Activated CD4-positive, alpha-beta memory T cell treated with anti-CD3 and anti-CD28 coated beads for 36 hours (primary cell): ENCODE measurements at regions of chr16 and their contacts with region 1.

Region 1: GRCh38 chr16:79316004-79316458 is 284.5 kb downstream of the MAF start:
- DNase-seq: peak; percentile 92
- H3K4me3 Mint-ChIP-seq: peak overlapping the region; percentile 28
- H3K27ac Mint-ChIP-seq: peak overlapping the region; percentile 91
- H3K4me1 Mint-ChIP-seq: peaks cover 37% of the 10 kb centered on the region
- H3K27me3 Mint-ChIP-seq: peaks cover 4% of the 10 kb centered on the region

Region 2: DNA sequence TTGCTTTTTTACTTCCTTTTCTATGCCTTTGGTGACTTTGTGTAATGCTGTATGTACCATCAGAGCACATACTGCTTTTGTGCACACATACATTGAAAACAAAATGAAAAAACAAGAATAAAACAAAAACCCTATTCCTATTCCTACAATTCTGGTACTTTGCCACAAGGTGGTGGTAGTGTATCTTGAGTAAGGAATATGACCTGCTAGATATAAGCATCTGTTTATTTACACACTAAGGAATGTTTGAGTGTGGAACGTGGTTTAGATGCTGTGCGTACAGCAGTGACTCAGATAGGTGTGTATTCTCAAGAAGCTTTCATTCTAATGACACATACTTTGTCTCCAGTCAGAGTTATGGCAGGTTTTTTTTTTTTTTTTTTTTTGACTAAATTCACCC is 610.3 kb before region 1 on chr16:
- CTCF ChIA-PET with region 1: no interaction called
- POLR2A ChIA-PET with region 1: no interaction called
- intact Hi-C with region 1: loop called (anchors 1 kb)
- DNase-seq: peak; percentile 51
- H3K4me3 Mint-ChIP-seq: no peak overlapping the region
- H3K27ac Mint-ChIP-seq: peak overlapping the region; percentile 87
- H3K4me1 Mint-ChIP-seq: peaks cover 16% of the 10 kb centered on the region
- H3K27me3 Mint-ChIP-seq: no peaks in the 10 kb centered on the region

Region 3: GRCh38 chr16:78892951-78893733 is 422.9 kb before region 1 on chr16:
- CTCF ChIA-PET with region 1: no interaction called
- POLR2A ChIA-PET with region 1: interaction called, 5 read pairs
- intact Hi-C with region 1: loop called (anchors 1 kb)
- DNase-seq: peak; percentile 65
- H3K4me3 Mint-ChIP-seq: peak overlapping the region; percentile 20
- H3K27ac Mint-ChIP-seq: peak overlapping the region; percentile 96
- H3K4me1 Mint-ChIP-seq: peaks cover 86% of the 10 kb centered on the region
- H3K27me3 Mint-ChIP-seq: no peaks in the 10 kb centered on the region

Region 4: DNA sequence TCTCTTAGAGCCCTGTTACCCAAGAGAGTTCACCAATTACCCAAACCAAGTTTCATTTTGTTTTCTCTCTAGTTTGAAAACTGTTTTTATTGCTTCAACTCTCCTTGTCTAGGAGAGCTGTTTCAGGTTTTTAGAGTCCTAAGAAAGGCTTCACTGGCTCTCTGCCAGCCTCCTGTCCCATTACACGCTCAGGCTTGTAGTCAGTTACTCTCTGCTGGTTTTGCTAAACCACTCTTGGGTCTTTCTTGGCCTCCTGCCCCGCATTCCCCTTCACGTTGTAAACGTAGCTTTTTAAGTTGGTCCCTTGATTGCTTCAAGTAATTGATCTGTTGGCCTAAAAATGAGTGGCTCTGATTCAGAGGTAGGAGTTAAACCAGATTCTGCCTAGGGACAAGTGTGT is 244.6 kb before region 1 on chr16:
- CTCF ChIA-PET with region 1: interaction called, 3 read pairs
- POLR2A ChIA-PET with region 1: interaction called, 12 read pairs
- intact Hi-C with region 1: loop called (anchors 1 kb)
- DNase-seq: no peak
- H3K4me3 Mint-ChIP-seq: no peak overlapping the region
- H3K27ac Mint-ChIP-seq: peak overlapping the region; percentile 84
- H3K4me1 Mint-ChIP-seq: peaks cover 74% of the 10 kb centered on the region
- H3K27me3 Mint-ChIP-seq: peaks cover 4% of the 10 kb centered on the region

Region 5: GRCh38 chr16:79269211-79269863 is 46.7 kb before region 1 on chr16:
- CTCF ChIA-PET with region 1: interaction called, 8 read pairs
- POLR2A ChIA-PET with region 1: interaction called, 28 read pairs
- intact Hi-C with region 1: loop called (anchors 1 kb)
- DNase-seq: peak; percentile 89
- H3K4me3 Mint-ChIP-seq: peak overlapping the region; percentile 60
- H3K27ac Mint-ChIP-seq: peak overlapping the region; percentile 98
- H3K4me1 Mint-ChIP-seq: peaks cover 91% of the 10 kb centered on the region
- H3K27me3 Mint-ChIP-seq: peaks cover 5% of the 10 kb centered on the region

Region 6: DNA sequence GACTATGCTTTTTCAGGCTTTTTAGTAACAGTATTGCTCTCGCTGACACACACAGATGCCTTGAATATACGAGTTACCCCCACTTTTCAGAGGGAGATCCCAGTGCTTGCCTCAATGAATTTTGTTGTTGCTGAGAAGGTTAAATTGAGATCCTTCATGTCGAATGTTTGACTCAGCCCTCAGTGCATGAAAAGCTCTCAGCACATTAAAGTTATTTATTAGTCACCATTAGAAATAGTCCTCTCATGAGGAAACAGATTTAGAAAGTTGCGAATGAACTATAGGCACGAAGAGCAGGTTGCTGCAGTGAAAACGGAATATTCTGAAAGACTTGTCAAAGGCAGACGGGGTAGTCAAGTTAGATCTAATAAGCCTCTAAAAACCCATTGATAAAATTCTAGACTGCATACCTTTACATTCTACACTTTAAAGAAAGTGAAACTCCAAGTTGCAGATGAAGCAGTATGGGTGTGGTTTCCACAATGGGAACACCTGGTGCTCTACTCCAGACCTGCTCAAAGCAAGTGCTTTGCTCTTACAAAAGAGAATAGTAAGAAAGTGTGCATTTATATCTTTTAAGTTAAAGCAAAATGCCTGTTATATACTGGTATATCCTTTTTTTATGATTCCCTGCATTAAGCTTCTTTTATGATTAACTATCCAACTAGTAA is 46.4 kb after region 1 on chr16:
- CTCF ChIA-PET with region 1: no interaction called
- POLR2A ChIA-PET with region 1: no interaction called
- intact Hi-C with region 1: loop called (anchors 5 kb)
- DNase-seq: no peak
- H3K4me3 Mint-ChIP-seq: no peak overlapping the region
- H3K27ac Mint-ChIP-seq: no peak overlapping the region
- H3K4me1 Mint-ChIP-seq: peaks cover 39% of the 10 kb centered on the region
- H3K27me3 Mint-ChIP-seq: no peaks in the 10 kb centered on the region